ENCODE measurements at regions of chr6 and their contacts with region 1.

Region 1: DNA sequence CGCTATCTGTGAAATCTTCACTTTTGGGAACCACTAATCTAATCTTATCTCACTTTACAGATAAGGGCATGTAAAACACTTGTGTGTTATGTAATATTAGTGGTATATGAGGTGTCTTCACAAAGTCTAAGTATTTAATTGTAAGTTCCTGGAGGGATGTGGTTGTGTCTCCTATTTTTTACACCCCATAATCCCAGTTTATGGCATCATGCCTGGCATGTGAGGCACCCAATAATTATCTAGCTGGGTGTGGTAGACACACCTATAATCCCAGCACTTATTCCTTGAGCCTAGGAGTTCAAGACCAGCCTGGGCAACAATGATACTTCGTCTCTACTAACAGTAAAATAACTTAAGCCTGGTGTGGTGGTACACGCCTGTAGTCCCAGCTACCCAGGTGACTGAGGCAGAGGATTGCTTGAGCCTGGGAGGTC is 16.5 kb upstream of the TBCC start:
- DNase-seq: no peak
- ATAC-seq: no peak
- H3K4me3 ChIP-seq: no peak overlapping the region
- H3K27ac ChIP-seq: no peak overlapping the region
- H3K4me1 ChIP-seq: no peaks in the 10 kb centered on the region
- H3K27me3 ChIP-seq: no peaks in the 10 kb centered on the region
- CTCF ChIP-seq: no peak
- EP300 ChIP-seq: no peak
- POLR2A ChIP-seq: no peak
- RAD21 ChIP-seq: no peak

Region 2: DNA sequence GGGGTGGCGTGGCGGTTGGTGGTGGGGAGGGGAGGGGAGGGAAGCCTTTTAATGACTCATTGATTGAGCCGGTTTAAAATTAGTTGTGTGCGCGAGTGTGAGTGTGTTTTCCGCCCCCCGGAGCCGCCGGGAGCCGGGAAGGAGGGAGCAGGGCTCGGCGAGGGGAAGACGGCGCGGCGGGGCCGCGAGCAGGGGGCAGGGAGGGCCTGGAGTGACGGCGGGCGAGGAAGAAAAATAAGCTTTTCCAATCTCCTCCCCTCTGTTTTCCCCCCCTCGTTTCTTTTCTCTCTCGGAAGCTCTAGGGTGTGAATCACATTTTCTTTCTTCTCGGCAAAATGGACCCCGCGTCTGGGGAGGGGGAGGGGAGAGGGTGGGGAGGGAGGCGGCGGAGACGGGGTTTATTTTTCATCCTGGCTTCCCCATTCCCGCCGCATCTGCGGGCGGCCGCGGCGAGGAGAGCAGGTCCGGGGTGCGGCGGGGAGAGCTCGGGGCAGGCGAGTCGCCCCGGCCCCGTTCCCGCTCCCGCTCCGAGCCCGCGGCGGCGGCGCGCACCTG is 20.3 kb after region 1 on chr6:
- CTCF ChIA-PET with region 1: no interaction called
- POLR2A ChIA-PET with region 1: interaction called, 10 read pairs
- in situ Hi-C with region 1: no loop called
- intact Hi-C with region 1: no loop called
- DNase-seq: peak; percentile 83
- ATAC-seq: peak; percentile 60
- H3K4me3 ChIP-seq: peak overlapping the region; percentile 85 to 94 (median 92)
- H3K27ac ChIP-seq: peak overlapping the region; percentile 98
- H3K4me1 ChIP-seq: peaks cover 64% of the 10 kb centered on the region
- H3K27me3 ChIP-seq: no peaks in the 10 kb centered on the region; a peak in 1 of 5 replicates
- CTCF ChIP-seq: no peak
- EP300 ChIP-seq: no peak
- POLR2A ChIP-seq: peak; percentile 54 to 90
- RAD21 ChIP-seq: no peak